ENCODE measurements at regions of chr6 and their contacts with region 1.

Region 1: GRCh38 chr6:3456755-3457466 is at the start of gene SLC22A23:
- DNase-seq: peak; percentile 83 to 85
- H3K4me3 ChIP-seq: peak within 1 kb of the TSS; percentile 54 to 69 (median 65)
- H3K27ac ChIP-seq: peak within 1 kb of the TSS in 2 of 3 donors; percentile 12 to 31
- H3K4me1 ChIP-seq: peaks cover 16 to 32% of the 10 kb centered on the region in 2 donors
- H3K27me3 ChIP-seq: no peaks in the 10 kb centered on the region
- CTCF ChIP-seq: peak in 5 of 6 experiments; percentile 58 to 93 (median 72)
- POLR2A ChIP-seq: peak in 1 of 2 donors; percentile 79
- total RNA-seq, gene SLC22A23: 16.6 to 21.8 (median 17.6) TPM

Region 2: GRCh38 chr6:3356056-3356761 is 100.7 kb before region 1 on chr6:
- intact Hi-C with region 1: loop called (anchors 10 kb)
- DNase-seq: peak; percentile 85 to 88
- H3K4me3 ChIP-seq: peak overlapping the region in 1 of 3 donors; percentile 17
- H3K27ac ChIP-seq: peak overlapping the region; percentile 88 to 98 (median 89)
- H3K4me1 ChIP-seq: peaks cover 49 to 51% of the 10 kb centered on the region in 2 donors
- H3K27me3 ChIP-seq: no peaks in the 10 kb centered on the region
- CTCF ChIP-seq: no peak
- POLR2A ChIP-seq: peak in 1 of 2 donors; percentile 65

Region 3: DNA sequence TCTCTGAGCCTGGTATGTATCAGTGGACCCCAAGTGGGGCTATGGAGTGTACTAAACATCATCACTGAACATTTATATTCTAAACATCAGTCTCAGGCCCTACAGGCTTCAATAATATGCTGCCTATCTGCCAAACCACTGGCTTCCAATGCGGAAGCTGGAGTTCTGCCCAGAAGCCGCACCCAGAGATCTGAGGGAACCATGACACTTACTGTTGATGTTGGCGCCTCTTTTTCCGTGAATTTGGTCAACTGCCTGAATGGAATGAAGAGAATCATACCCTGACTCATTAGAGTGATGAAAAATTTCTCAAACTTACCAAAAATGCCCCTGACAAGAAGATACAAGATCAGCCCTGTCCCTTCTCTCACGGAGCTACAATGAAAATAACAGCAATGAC is 66.2 kb before region 1 on chr6:
- intact Hi-C with region 1: loop called (anchors 10 kb)
- DNase-seq: peak; percentile 40 to 42
- H3K4me3 ChIP-seq: no peak overlapping the region
- H3K27ac ChIP-seq: peak overlapping the region in 2 of 3 donors; percentile 18 to 51
- H3K4me1 ChIP-seq: peaks cover 15 to 46% of the 10 kb centered on the region in 2 donors
- H3K27me3 ChIP-seq: no peaks in the 10 kb centered on the region
- CTCF ChIP-seq: no peak
- POLR2A ChIP-seq: no peak